RWPE1 (cell line): ENCODE measurements at regions of chr12 and their contacts with region 1.

Region 1: DNA sequence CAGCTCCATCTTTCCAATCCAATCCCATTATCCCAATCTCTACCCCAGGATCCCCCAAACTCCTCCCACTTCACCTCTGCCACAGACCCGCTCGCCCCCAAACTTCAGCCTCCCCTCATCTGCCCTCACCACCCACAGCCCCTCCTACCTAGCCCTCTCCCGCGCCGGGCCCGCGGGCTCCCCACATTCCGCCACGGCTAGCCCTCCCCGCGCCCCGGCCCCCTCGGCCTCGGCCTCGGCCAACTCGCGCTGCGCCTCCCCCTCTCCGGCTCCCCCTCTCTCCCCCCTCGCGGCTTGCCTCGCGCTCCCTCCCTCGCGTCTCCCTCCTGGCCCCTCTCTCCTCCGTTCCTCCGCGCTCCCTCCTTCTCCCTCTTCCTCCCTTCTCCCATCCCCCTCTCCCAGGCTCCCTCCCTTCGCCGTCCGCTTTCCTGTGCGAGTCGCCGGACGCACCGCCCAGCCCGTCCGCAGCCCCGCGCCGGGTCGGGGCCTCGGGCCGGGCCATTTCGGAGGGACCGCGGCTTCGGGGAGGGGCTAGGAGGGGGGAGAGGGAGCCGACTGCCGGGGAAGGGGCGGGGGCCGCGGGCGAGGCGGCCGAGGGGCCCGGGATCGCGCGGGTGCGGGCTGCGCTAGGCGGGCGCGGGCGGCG is at the start of gene ATN1:
- DNase-seq: no peak
- H3K27ac ChIP-seq: peak within 1 kb of the TSS; percentile 98
- CTCF ChIP-seq: no peak

Region 2: DNA sequence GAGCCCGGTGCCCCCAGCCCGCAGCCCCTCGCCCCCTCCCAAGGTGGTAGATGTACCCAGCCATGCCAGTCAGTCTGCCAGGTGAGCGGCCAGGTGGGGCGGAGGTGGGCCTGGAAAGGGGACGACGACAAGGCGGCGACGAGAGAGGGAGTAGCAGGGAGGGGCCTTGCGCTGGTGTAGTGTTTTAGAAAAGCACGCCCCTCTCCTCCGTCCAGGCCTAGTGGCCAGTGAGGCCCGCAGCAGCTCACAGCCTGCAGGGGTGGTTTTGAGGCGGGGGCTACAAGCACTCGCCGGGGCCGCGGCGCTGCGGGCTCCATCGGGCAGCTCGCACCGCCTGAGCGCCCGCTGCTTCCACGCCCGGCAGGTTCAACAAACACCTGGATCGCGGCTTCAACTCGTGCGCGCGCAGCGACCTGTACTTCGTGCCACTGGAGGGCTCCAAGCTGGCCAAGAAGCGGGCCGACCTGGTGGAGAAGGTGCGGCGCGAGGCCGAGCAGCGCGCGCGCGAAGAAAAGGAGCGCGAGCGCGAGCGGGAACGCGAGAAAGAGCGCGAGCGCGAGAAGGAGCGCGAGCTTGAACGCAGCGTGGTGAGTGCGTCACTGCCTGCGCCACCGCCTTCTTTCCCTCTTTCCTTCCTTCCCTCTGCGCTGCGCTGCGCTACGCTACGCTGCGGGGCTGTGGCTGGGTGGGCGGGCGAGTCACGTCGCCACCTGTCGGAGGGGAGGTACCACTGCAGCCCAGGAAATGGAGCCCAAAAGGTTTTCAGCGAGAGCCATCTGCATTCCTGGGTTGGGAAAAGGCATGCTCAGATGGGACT is 10.2 kb after region 1 on chr12:
- CTCF ChIA-PET with region 1: interaction called, 15 read pairs
- POLR2A ChIA-PET with region 1: interaction called, 3 read pairs
- DNase-seq: peak; percentile 74
- H3K27ac ChIP-seq: peak overlapping the region; percentile 82
- CTCF ChIP-seq: peak; percentile 78

Region 3: GRCh38 chr12:6987948-6988553 is 60.5 kb after region 1 on chr12:
- CTCF ChIA-PET with region 1: no interaction called
- POLR2A ChIA-PET with region 1: no interaction called
- DNase-seq: no peak
- H3K27ac ChIP-seq: no peak overlapping the region
- CTCF ChIP-seq: no peak